Activated CD4-positive, alpha-beta T cell treated with anti-CD3 and anti-CD28 coated beads, Interleukin-2, amount 10 ng/mL, durations not matched to agents 24 days and 14 days (primary cell): ENCODE measurements at regions of chr12 and their contacts with region 1.

Region 1: GRCh38 chr12:108562348-108563135 is at the start of gene ISCU:
- DNase-seq: peak; percentile 100
- H3K4me3 Mint-ChIP-seq: peak within 1 kb of the TSS; percentile 99
- H3K27ac Mint-ChIP-seq: peak within 1 kb of the TSS; percentile 100
- H3K4me1 Mint-ChIP-seq: peaks cover 33% of the 10 kb centered on the region
- H3K27me3 Mint-ChIP-seq: no peaks in the 10 kb centered on the region
- total RNA-seq, gene ISCU: 61.5 and 66.1 TPM in 2 replicates

Region 2: GRCh38 chr12:107093417-107094182 is 1468.9 kb before region 1 on chr12 and contains the start of gene CRY1:
- intact Hi-C with region 1: loop called (anchors 2 kb)
- DNase-seq: peak; percentile 98
- H3K4me3 Mint-ChIP-seq: no peak within 1 kb of the TSS
- H3K27ac Mint-ChIP-seq: no peak within 1 kb of the TSS
- H3K4me1 Mint-ChIP-seq: peaks cover 4% of the 10 kb centered on the region
- H3K27me3 Mint-ChIP-seq: peaks cover 12% of the 10 kb centered on the region
- total RNA-seq, gene CRY1: 23.8 and 26.0 TPM in 2 replicates

Region 3: DNA sequence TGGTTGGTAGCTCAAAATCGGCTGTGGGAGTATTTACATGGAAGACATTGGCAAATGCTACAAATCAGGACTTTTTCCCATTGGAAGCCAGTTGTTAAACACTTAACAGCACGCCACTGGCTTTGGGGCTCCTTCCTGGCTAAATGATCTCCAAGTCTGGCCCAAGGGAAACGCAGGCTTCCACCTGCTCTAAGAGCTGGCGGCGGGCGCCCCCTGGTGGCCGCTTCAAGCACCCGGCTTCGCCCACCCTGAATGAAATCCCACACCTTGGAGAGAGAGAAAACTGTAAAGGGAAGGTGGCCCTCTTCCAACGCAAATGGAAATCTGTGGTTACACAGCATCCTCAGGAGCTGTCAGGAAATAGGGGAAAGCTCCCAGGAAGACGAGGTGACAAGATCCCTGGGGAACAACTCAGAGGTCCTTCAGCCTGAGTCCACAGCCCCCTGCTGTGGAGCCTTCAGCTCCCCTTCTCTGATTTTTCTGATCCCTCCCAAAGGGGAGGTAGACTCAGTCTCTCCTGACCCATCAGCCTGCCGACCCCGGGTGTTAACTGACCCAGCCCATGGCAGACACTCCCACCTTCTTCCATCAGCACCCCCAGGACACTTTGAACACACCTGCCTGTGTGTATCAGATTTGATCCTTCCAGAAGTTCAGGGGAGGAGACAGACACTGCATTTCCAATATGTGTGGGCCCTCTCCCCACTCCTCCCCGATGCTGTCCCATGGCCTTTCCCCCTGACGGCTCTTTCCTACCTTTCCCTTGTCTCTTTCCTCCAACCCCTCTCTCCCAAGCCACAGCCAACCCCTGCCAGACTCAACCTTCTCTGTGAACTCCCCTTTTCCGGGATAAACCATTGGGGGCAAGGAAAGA is 55.8 kb after region 1 on chr12:
- intact Hi-C with region 1: loop called (anchors 1 kb)
- DNase-seq: peak; percentile 93
- H3K4me3 Mint-ChIP-seq: no peak overlapping the region
- H3K27ac Mint-ChIP-seq: peak overlapping the region; percentile 83
- H3K4me1 Mint-ChIP-seq: peaks cover 50% of the 10 kb centered on the region
- H3K27me3 Mint-ChIP-seq: no peaks in the 10 kb centered on the region

Region 4: DNA sequence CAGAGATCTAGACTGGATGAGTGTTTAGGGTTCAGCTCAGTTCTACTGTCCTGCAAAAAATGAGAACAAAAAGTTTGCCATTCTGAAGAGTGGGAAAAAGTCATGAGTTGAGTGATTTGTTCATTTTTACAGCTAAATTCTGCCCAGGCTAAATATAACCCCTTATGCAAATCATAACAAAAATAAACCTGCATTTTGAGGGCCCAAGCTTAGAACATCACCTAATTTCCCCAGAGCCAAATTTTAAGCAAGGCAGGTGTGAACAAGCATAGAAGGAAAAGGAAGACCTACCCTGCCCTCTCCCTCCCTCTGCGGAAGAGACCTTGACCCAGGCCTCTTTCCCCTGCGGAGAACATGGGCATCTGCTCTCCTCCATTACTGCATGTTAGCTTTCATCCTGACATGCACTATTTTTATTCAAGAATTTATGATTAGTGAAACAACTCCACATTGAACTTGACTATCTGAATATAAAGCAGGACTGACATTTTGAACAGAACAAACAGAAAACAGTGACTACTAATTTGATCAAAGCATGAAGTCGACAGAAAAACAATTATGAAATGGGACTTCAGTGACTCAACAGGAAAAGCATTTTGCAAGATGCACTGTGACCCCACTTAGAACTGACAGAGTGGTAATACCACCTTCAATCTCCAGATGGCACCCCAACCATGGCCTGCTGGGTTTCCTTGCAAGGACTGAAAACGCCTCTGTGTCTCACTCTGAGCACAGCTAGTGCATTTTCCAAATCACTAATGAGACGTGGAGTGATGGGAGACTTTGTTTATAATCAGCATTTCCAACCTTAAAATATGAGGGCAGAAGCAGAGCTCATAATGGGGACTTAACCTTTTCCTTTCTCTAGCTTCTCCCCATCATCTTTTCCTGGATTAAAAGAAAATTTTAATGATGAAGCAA is 102.1 kb after region 1 on chr12:
- intact Hi-C with region 1: loop called (anchors 1 kb)
- DNase-seq: peak; percentile 95
- H3K4me3 Mint-ChIP-seq: peak overlapping the region; percentile 58
- H3K27ac Mint-ChIP-seq: peak overlapping the region; percentile 77
- H3K4me1 Mint-ChIP-seq: peaks cover 15% of the 10 kb centered on the region
- H3K27me3 Mint-ChIP-seq: no peaks in the 10 kb centered on the region

Region 5: DNA sequence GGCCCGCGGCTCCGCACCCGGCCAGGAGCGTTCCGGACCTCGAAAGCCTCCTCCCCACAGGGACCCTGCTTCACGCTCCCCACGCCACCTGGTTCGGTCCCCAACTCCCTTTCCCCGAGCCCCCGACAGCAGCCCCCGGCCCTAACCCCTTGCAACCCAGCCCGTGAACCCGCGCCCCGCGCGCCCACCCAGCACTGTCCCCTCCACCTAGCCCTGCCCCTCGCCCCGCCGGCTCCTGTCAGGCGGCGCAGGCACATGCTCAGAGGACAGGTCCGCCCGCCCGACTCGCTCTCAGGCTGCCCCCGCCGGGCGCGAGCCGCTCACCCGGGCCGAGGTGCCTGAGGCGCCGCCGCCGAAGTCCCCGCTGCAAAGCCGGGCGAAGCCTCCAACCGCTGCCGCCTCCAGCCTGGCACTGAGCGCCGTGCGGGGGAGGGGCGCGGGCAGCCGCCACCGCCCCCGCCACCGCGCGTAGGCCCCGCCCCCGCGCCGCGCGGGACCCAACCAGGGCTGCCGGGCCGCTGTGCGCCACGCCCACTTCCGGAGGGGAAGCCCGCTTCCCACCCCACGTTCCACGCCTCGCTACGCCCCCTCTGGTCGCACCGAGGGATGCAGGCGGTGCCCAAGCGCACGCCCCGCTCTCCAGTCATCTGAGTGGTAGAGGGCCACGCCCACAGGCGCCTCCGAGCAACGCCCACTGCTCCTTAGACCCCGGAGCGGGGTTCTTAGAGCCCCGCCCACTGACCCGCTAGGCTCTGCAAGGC is 168.7 kb after region 1 on chr12 and contains the start of gene CORO1C:
- intact Hi-C with region 1: loop called (anchors 1 kb)
- DNase-seq: peak; percentile 99
- H3K4me3 Mint-ChIP-seq: peak within 1 kb of the TSS; percentile 94
- H3K27ac Mint-ChIP-seq: peak within 1 kb of the TSS; percentile 95
- H3K4me1 Mint-ChIP-seq: peaks cover 41% of the 10 kb centered on the region
- H3K27me3 Mint-ChIP-seq: peaks cover 6% of the 10 kb centered on the region
- total RNA-seq, gene CORO1C: 64.6 and 70.1 TPM in 2 replicates

Region 6: GRCh38 chr12:108856428-108857157 is 294.1 kb after region 1 on chr12:
- intact Hi-C with region 1: loop called (anchors 2 kb)
- DNase-seq: peak; percentile 84
- H3K4me3 Mint-ChIP-seq: peak overlapping the region; percentile 91
- H3K27ac Mint-ChIP-seq: peak overlapping the region; percentile 84
- H3K4me1 Mint-ChIP-seq: peaks cover 43% of the 10 kb centered on the region
- H3K27me3 Mint-ChIP-seq: peaks cover 1% of the 10 kb centered on the region

Region 7: GRCh38 chr12:109052414-109053323 is 490.1 kb after region 1 on chr12 and contains the start of gene USP30:
- intact Hi-C with region 1: loop called (anchors 2 kb)
- DNase-seq: peak; percentile 95
- H3K4me3 Mint-ChIP-seq: peak within 1 kb of the TSS; percentile 86
- H3K27ac Mint-ChIP-seq: peak within 1 kb of the TSS; percentile 95
- H3K4me1 Mint-ChIP-seq: peaks cover 8% of the 10 kb centered on the region
- H3K27me3 Mint-ChIP-seq: no peaks in the 10 kb centered on the region
- total RNA-seq, gene USP30: 6.6 and 6.9 TPM in 2 replicates